Motor neuron (in vitro differentiated cells): ENCODE measurements at regions of chr9 and their contacts with region 1.

Region 1: GRCh38 chr9:35790385-35791296 is 750 bp upstream of the NPR2 start:
- ATAC-seq: peak; percentile 71 to 90 (median 86)
- H3K4me3 ChIP-seq: peak overlapping the region; percentile 31 to 39 (median 36)
- H3K27ac ChIP-seq: peak overlapping the region; percentile 13 to 84
- H3K4me1 ChIP-seq: peaks cover 21 to 39% of the 10 kb centered on the region in 2 donors

Region 2: GRCh38 chr9:35882263-35882848 is 91.7 kb after region 1 on chr9:
- in situ Hi-C with region 1: loop called in 5 of 9 experiments (anchors 10 to 25 kb)
- ATAC-seq: peak; percentile 77 to 91 (median 86)
- H3K4me3 ChIP-seq: no peak overlapping the region
- H3K27ac ChIP-seq: no peak overlapping the region
- H3K4me1 ChIP-seq: peaks cover 2% of the 10 kb centered on the region in 2 donors

Region 3: DNA sequence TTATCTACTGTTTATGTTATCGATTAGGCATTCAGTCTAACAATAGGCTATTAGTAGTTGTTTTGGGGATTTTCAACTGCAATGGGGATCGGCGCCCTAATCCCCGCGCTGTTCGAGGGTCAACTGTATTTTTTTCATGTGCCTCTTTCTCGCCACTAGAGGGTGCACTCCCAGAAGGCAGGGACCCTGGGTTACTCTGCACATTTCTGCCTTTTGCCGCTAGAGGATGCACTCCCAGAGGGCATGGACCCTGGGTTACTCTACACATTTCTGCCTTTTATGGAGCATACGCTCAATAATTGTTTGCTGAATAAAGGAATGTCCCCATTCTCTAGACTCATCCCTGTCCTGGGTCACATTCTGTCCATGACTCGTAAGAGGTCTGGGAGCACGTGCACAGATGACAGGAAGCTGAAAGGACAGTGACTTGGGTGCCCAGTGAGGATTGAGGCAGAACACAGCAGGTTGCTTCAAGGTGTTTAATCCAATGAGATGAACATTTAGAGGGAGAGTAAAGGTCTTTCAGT is 218.2 kb after region 1 on chr9:
- in situ Hi-C with region 1: loop called in 1 of 9 experiments (anchors 25 kb)
- ATAC-seq: peak in 5 of 8 experiments; percentile 22 to 65 (median 46)
- H3K4me3 ChIP-seq: no peak overlapping the region
- H3K27ac ChIP-seq: no peak overlapping the region
- H3K4me1 ChIP-seq: no peaks in the 10 kb centered on the region